Adrenal gland (tissue), 19 donors: ENCODE measurements at regions of chr18 and their contacts with region 1.

Region 1: GRCh38 chr18:32930695-32931301 is 158.0 kb upstream of the KLHL14 start:
- DNase-seq: no peak
- H3K4me3 ChIP-seq: no peak overlapping the region
- H3K27ac ChIP-seq: no peak overlapping the region
- H3K4me1 ChIP-seq: no peaks in the 10 kb centered on the region
- H3K27me3 ChIP-seq: no peaks in the 10 kb centered on the region
- CTCF ChIP-seq: peak in 5 of 6 experiments; percentile 20 to 43 (median 24)
- POLR2A ChIP-seq: no peak

Region 2: GRCh38 chr18:32714571-32715148 is 216.1 kb before region 1 on chr18:
- intact Hi-C with region 1: loop called in 1 of 2 experiments (anchors 10 kb)
- DNase-seq: peak; percentile 10 to 59 (median 36)
- H3K4me3 ChIP-seq: no peak overlapping the region
- H3K27ac ChIP-seq: no peak overlapping the region
- H3K4me1 ChIP-seq: no peaks in the 10 kb centered on the region
- H3K27me3 ChIP-seq: no peaks in the 10 kb centered on the region
- CTCF ChIP-seq: peak; percentile 54 to 72 (median 61)
- POLR2A ChIP-seq: no peak